ENCODE measurements at regions of chr2 and their contacts with region 1.

Region 1: DNA sequence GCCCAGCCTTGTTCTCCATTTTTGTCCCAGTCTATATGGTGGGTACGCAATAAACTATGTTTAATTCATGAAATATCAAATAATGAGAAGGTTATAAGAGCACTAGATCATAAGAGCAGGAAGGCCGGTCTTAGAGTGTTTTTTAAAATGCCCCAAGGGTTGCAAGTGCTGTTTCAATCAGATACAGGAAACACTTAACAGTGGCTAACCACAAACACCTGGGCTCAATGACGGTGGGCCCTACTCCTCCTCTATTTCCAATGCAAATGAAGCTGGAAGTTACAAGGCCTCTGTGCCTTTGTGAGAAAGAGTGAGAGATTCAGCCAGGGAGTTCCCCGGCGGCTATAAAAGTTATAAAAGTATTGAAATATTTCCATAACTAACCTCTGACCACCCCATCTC is 18.9 kb upstream of the WDR33 start:
- DNase-seq: peak; percentile 96
- ATAC-seq: peak; percentile 94
- H3K4me3 ChIP-seq: peak overlapping the region; percentile 35; the same call in 1 of the 2 replicates
- H3K27ac ChIP-seq: peak overlapping the region; percentile 92
- H3K4me1 ChIP-seq: peaks cover 38% of the 10 kb centered on the region
- H3K27me3 ChIP-seq: no peaks in the 10 kb centered on the region
- CTCF ChIP-seq: no peak
- EP300 ChIP-seq: peak; percentile 92 to 94
- POLR2A ChIP-seq: no peak
- RAD21 ChIP-seq: no peak

Region 2: GRCh38 chr2:127623388-127624245 is 206.2 kb before region 1 on chr2:
- CTCF ChIA-PET with region 1: no interaction called
- POLR2A ChIA-PET with region 1: no interaction called
- RAD21 ChIA-PET with region 1: no interaction called
- SMC1A ChIA-PET with region 1: no interaction called
- in situ Hi-C with region 1: no loop called
- intact Hi-C with region 1: no loop called
- DNase-seq: no peak
- ATAC-seq: no peak
- H3K4me3 ChIP-seq: no peak overlapping the region
- H3K27ac ChIP-seq: no peak overlapping the region
- H3K4me1 ChIP-seq: no peaks in the 10 kb centered on the region
- H3K27me3 ChIP-seq: no peaks in the 10 kb centered on the region
- CTCF ChIP-seq: no peak
- EP300 ChIP-seq: no peak
- POLR2A ChIP-seq: no peak
- RAD21 ChIP-seq: no peak

Region 3: GRCh38 chr2:127743477-127744026 is 86.3 kb before region 1 on chr2:
- CTCF ChIA-PET with region 1: interaction called, 11 read pairs
- POLR2A ChIA-PET with region 1: interaction called, 9 read pairs
- RAD21 ChIA-PET with region 1: interaction called, 6 read pairs
- SMC1A ChIA-PET with region 1: interaction called, 13 read pairs
- in situ Hi-C with region 1: no loop called
- intact Hi-C with region 1: no loop called
- DNase-seq: no peak
- ATAC-seq: peak; percentile 86
- H3K4me3 ChIP-seq: no peak overlapping the region
- H3K27ac ChIP-seq: no peak overlapping the region
- H3K4me1 ChIP-seq: no peaks in the 10 kb centered on the region; the same call in 1 of the 2 replicates
- H3K27me3 ChIP-seq: no peaks in the 10 kb centered on the region
- CTCF ChIP-seq: 0 out of 6 replicates have a peak, but pooled peaks of 1 of the 3 experiments have one; percentile 11
- EP300 ChIP-seq: peak; percentile 90 to 92; a peak in 3 of 4 replicates
- POLR2A ChIP-seq: no peak
- RAD21 ChIP-seq: no peak

Region 4: GRCh38 chr2:127753374-127753773 is 76.5 kb before region 1 on chr2:
- CTCF ChIA-PET with region 1: interaction called, 11 read pairs
- POLR2A ChIA-PET with region 1: interaction called, 9 read pairs
- RAD21 ChIA-PET with region 1: interaction called, 15 read pairs
- SMC1A ChIA-PET with region 1: interaction called, 13 read pairs
- in situ Hi-C with region 1: no loop called
- intact Hi-C with region 1: no loop called
- DNase-seq: no peak
- ATAC-seq: no peak
- H3K4me3 ChIP-seq: no peak overlapping the region
- H3K27ac ChIP-seq: no peak overlapping the region
- H3K4me1 ChIP-seq: peaks cover 13% of the 10 kb centered on the region
- H3K27me3 ChIP-seq: no peaks in the 10 kb centered on the region
- CTCF ChIP-seq: no peak
- EP300 ChIP-seq: no peak
- POLR2A ChIP-seq: no peak
- RAD21 ChIP-seq: no peak

Region 5: DNA sequence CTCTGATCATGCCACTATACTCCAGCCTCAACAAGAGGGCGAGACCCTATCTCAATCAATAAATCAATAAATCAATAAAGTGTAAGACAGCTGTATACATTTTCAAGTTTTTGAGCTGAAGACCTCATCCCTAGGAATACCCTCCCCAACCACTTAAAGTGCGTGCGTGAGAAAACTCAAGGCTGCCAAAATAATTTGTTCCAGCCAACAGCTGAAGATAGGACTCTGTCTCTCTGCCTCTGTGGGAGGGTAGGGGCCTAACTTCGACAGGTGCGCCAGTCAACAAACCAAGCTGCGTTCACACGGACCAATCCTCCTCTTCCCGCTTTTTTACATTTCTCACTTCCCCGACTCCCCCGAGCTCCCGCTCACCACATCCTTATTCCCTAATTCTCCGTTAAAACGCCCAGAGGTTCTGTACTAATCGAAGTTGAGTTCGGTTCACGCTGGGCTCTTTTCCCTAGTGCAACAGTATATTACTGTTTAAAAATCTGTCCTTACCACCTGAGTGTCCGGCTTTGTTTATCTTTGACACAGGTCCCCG is 27.5 kb after region 1 on chr2:
- CTCF ChIA-PET with region 1: interaction called, 8 read pairs
- POLR2A ChIA-PET with region 1: interaction called, 5 read pairs
- RAD21 ChIA-PET with region 1: interaction called, 12 read pairs
- SMC1A ChIA-PET with region 1: interaction called, 19 read pairs
- in situ Hi-C with region 1: no loop called
- intact Hi-C with region 1: no loop called
- DNase-seq: no peak
- ATAC-seq: peak; percentile 43
- H3K4me3 ChIP-seq: peak overlapping the region; percentile 93
- H3K27ac ChIP-seq: peak overlapping the region; percentile 65
- H3K4me1 ChIP-seq: 0 out of 2 replicates have a peak, but pooled peaks cover 2% of the 10 kb centered on the region
- H3K27me3 ChIP-seq: no peaks in the 10 kb centered on the region
- CTCF ChIP-seq: no peak
- EP300 ChIP-seq: no peak
- POLR2A ChIP-seq: no peak
- RAD21 ChIP-seq: no peak

Measured in GM12878 (cell line).